Left cardiac atrium (tissue), 4 donors: ENCODE measurements at regions of chr18 and their contacts with region 1.

Region 1: DNA sequence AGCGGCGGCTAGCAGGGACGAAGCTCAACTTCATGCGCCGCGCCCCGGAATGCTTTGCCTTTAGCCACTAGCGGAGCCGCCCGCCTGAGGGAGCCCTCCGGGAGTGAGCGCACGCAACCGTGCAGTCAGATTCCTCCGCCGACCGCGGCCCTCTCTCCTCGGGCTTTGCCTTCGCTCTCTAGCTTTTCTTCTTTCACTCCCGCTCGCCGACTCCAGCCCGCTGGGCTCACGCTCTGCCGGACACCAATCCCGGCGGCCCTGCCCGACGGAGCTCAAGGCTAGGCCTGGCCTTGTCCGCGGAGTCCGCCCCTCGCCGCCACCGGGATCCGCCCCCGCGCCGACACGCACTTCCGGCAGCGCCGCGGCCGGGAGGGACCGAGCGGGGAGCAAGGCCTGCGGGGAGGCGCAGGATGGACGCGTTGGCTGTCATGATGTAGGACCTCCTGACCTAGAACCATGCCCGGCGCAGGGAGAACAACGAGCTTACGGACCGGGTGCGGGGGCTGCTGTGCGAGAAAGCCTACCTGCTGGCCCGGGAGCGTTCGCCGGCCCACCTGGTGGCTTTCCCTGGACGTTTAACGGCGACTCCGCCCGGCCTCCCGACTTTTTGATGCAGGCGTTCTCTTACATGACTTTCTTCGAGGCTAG is 40.8 kb upstream of the AKAIN1 start:
- DNase-seq: peak; percentile 90
- ATAC-seq: peak; percentile 98 to 99

Region 2: GRCh38 chr18:5021558-5021957 is 216.3 kb before region 1 on chr18:
- intact Hi-C with region 1: no loop called
- DNase-seq: no peak
- ATAC-seq: no peak

Region 3: GRCh38 chr18:5295981-5296705 is 58.3 kb after region 1 on chr18:
- intact Hi-C with region 1: loop called in 1 of 2 experiments (anchors 2 kb)
- DNase-seq: peak; percentile 98
- ATAC-seq: peak; percentile 88 to 93

Region 4: DNA sequence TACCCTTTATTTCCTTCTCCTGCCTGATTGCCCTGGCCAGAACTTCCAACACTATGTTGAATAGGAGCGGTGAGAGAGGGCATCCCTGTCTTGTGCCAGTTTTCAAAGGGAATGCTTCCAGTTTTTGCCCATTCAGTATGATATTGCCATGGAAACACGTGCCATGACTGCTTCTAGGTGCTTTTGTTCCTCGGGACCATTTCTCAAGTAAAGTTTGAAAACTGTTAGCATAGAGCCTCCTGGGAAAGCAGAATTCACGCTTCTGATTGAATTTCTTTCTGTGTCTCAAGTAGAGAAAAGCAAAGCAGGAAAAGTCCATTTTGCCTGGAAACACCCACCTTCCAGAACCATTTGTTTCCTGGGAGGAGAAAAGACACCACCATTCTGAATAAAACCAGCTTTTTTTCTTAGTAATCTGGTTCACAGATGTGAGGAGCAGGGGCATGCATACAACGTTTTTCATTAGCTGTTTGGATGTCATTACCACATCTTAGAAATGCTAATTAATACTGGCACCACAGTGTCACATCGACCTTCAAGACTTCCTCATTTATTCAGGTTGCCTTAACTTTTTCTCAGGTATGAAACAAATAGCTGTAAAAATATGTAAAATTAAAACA is 96.7 kb after region 1 on chr18:
- intact Hi-C with region 1: no loop called
- DNase-seq: no peak
- ATAC-seq: no peak

Region 5: GRCh38 chr18:5414546-5414945 is 176.7 kb after region 1 on chr18:
- intact Hi-C with region 1: no loop called
- DNase-seq: no peak
- ATAC-seq: no peak

Region 6: GRCh38 chr18:5604778-5605177 is 366.9 kb after region 1 on chr18:
- intact Hi-C with region 1: no loop called
- DNase-seq: no peak
- ATAC-seq: no peak